Naive thymus-derived CD8-positive, alpha-beta T cell (primary cell): ENCODE measurements at regions of chr6 and their contacts with region 1.

Region 1: DNA sequence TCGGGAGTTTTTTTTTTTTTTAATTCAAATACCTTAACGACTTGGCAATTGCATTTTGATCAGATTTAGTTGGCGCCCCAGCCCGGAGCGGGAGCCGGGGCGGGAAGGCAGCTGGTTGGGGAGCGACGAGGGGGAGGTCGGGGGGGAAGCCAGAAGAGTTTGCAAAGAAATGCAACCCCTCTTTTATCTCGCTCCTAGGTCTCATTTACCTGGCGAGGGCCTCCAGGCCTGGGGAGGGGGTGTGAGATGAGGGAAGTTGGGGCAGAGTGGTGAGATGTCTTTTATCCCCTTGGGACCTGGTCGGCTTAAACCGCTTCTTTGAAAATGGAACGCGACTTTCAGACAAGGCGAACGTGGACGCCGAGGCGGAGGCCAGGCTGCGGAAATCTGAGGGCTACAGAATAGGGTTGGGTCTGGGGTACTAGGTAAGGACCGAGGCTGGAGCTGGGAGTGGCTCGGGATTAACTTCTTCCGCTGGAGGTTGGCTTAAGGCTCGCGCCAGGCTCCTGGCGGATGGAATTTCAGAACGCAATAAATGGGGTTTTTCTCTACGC is 40.3 kb downstream of the NCR2 start:
- DNase-seq: no peak
- ATAC-seq: no peak
- H3K4me3 Mint-ChIP-seq: peak overlapping the region in 4 of 10 donors; percentile 18 to 68 (median 30)
- H3K27ac Mint-ChIP-seq: no peak overlapping the region
- H3K4me1 Mint-ChIP-seq: peaks cover 28 to 44% (median 41%) of the 10 kb centered on the region in 4 donors
- H3K27me3 Mint-ChIP-seq: peaks cover 32 to 68% (median 63%) of the 10 kb centered on the region in 5 donors

Region 2: DNA sequence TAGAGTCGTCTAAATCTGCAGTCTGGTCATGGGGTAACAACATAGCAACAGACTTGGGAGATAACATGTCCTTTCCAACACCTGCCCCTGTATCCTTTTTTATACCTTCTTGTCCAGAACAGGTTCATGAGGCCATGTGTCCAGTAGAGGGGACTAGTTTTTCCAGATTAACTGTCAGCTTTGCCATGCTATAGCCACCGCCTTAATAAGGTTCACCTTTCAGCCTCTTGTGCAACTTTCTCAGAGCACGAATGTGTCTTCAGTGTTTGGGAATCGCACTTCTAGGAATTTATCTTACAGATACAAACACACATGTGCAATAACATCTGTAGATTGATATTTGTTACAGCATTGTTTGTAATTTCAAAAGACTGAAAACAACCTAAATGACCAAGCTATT is 18.9 kb before region 1 on chr6:
- POLR2A ChIA-PET with region 1: no interaction called
- DNase-seq: no peak
- ATAC-seq: no peak
- H3K4me3 Mint-ChIP-seq: no peak overlapping the region
- H3K27ac Mint-ChIP-seq: no peak overlapping the region
- H3K4me1 Mint-ChIP-seq: peaks cover 0 to 2% (median 0%) of the 10 kb centered on the region in 4 donors
- H3K27me3 Mint-ChIP-seq: peaks cover 0 to 3% (median 0%) of the 10 kb centered on the region in 5 donors

Region 3: GRCh38 chr6:41404182-41404845 is 28.6 kb after region 1 on chr6:
- POLR2A ChIA-PET with region 1: no interaction called
- DNase-seq: no peak
- ATAC-seq: no peak
- H3K4me3 Mint-ChIP-seq: no peak overlapping the region
- H3K27ac Mint-ChIP-seq: peak overlapping the region in 2 of 10 donors; percentile 51 to 60
- H3K4me1 Mint-ChIP-seq: no peaks in the 10 kb centered on the region
- H3K27me3 Mint-ChIP-seq: peaks cover 13 to 43% (median 21%) of the 10 kb centered on the region in 5 donors

Region 4: DNA sequence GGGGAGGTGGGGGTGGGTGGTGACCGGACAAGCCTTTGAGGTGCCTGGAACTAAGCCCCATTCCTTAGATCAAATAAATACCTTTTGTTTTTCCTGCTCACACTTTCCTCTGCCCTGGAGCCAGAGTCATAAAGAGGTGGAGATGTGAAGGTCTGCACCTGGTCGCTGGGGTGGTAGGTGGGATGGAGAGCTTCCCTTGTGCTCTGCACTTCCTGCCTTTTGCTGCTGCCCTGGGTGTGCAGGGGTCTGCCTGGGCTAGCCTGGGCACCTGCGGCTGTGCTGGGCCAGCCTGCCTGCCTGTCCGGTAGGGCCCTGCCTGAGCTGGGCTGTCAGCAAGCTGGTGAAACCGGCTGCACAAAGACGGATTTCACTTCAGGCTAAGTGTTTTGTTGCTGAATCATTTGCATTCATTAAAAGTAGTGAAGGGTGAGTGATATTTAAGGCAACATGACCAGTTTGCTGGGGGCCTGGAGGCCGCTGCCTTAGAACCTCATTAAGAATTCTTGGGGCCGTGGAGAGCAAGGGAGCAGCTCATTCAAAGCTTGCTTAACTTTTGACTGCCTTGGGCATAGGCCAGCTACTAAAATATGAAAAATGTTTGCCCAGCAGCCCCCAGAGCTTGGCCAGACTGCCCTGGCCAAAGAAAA is 1720.9 kb after region 1 on chr6:
- POLR2A ChIA-PET with region 1: interaction called, 11 read pairs
- DNase-seq: no peak
- ATAC-seq: no peak
- H3K4me3 Mint-ChIP-seq: no peak overlapping the region
- H3K27ac Mint-ChIP-seq: peak overlapping the region in 2 of 10 donors; percentile 62 to 71
- H3K4me1 Mint-ChIP-seq: peaks cover 2 to 23% (median 15%) of the 10 kb centered on the region in 4 donors
- H3K27me3 Mint-ChIP-seq: no peaks in the 10 kb centered on the region